B cell (primary cell): ENCODE measurements at regions of chr20 and their contacts with region 1.

Region 1: DNA sequence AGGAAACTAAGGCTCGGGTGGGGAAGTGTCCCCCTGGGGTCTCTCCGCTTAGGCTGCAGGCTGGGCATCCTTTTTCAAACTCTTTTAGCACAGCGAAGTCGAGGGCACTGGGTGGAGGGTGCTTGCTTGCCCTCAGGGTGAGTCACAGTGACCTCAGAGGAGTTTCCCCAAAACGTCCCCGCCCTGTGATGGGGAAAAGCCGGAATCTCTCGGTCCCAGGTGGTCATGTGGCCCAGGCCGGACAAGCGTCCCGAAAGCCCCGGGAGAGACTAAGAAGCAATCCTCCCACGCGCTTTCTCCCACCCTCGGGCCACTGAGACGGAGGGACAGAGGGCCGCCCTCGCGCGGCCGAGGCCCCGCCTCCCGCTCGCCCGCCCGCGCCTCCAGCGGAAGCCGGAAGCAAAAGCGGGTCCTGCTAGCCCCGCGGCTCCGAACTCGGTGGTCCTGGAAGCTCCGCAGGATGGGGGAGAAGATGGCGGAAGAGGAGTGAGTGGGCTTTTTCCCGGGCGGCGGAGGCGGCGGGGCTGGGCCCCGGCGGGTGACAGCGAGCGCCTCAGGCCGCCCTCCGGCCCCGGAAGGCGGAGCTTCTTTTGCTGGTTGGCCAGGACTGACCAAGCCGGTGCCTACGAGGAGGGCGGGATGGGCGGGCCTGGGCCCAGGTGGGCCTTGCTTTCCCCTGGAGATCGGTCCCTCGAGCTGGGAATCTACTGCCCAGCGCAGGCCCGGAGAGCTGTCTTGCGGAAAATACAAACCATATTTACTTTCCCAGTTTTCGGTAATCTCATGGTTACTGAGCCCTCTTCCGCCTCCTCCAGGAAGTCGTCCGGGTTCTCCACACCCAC is at the start of gene SLC9A8:
- DNase-seq: peak; percentile 93
- ATAC-seq: peak; percentile 89
- H3K4me3 ChIP-seq: peak within 1 kb of the TSS; percentile 81 to 97 (median 87)
- H3K4me3 Mint-ChIP-seq: peak within 1 kb of the TSS; percentile 97
- H3K27ac ChIP-seq: peak within 1 kb of the TSS; percentile 93 to 98
- H3K27ac Mint-ChIP-seq: peak within 1 kb of the TSS; percentile 94
- H3K4me1 ChIP-seq: peaks cover 24 to 31% of the 10 kb centered on the region in 2 donors
- H3K4me1 Mint-ChIP-seq: peaks cover 47% of the 10 kb centered on the region
- H3K27me3 ChIP-seq: no peaks in the 10 kb centered on the region
- H3K27me3 Mint-ChIP-seq: no peaks in the 10 kb centered on the region
- CTCF ChIP-seq: peak; percentile 35
- total RNA-seq, gene SLC9A8: 24.2 and 29.7 TPM in 2 replicates

Region 2: DNA sequence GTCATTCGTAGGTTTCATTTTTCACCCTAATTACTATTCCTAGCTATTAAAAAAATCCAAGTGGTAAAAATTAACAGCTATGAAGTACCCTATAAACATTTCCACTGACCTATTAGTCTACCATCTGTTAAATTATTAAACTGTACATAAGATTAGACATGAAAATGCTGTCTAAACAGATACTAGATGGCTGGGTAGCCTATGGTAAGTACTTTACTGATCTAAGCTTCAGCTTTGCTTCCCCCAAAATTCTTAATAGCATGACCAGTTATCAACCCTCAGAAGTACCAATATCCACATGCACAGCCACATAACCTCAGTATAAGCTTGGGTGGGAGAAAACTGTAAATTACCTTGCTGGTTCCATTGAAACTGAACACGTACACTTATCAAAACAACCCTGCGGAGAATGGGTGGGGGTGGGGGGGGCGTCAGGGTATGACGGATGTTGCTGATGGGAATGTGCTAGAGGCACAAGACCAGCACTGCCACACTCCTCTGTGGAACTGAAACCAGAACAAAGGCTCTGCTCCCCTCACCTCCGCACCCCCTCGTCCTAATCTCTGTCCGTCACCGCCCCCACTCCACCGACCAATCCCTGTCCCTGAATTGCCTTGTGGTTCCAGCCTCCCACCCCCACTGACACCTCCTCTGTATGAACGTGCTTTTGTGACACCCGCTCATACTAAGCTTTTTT is 144.4 kb before region 1 on chr20:
- CTCF ChIA-PET with region 1: no interaction called
- POLR2A ChIA-PET with region 1: no interaction called
- intact Hi-C with region 1: loop called (anchors 1 kb)
- DNase-seq: peak; percentile 78
- ATAC-seq: peak; percentile 92
- H3K4me3 ChIP-seq: peak overlapping the region in 1 of 5 experiments; percentile 8
- H3K4me3 Mint-ChIP-seq: peak overlapping the region; percentile 81
- H3K27ac ChIP-seq: no peak overlapping the region
- H3K27ac Mint-ChIP-seq: peak overlapping the region; percentile 54
- H3K4me1 ChIP-seq: peaks cover 21 to 22% of the 10 kb centered on the region in 2 donors
- H3K4me1 Mint-ChIP-seq: peaks cover 38% of the 10 kb centered on the region
- H3K27me3 ChIP-seq: no peaks in the 10 kb centered on the region
- H3K27me3 Mint-ChIP-seq: no peaks in the 10 kb centered on the region
- CTCF ChIP-seq: no peak

Region 3: GRCh38 chr20:49724408-49725223 is 88.1 kb before region 1 on chr20:
- CTCF ChIA-PET with region 1: no interaction called
- POLR2A ChIA-PET with region 1: no interaction called
- intact Hi-C with region 1: no loop called
- DNase-seq: peak; percentile 58
- ATAC-seq: peak; percentile 21
- H3K4me3 ChIP-seq: no peak overlapping the region
- H3K4me3 Mint-ChIP-seq: no peak overlapping the region
- H3K27ac ChIP-seq: no peak overlapping the region
- H3K27ac Mint-ChIP-seq: no peak overlapping the region
- H3K4me1 ChIP-seq: peaks cover 7 to 11% of the 10 kb centered on the region in 2 donors
- H3K4me1 Mint-ChIP-seq: peaks cover 12% of the 10 kb centered on the region
- H3K27me3 ChIP-seq: peaks cover 0 to under 1% (median 0%) of the 10 kb centered on the region in 4 experiments
- H3K27me3 Mint-ChIP-seq: no peaks in the 10 kb centered on the region
- CTCF ChIP-seq: no peak

Region 4: DNA sequence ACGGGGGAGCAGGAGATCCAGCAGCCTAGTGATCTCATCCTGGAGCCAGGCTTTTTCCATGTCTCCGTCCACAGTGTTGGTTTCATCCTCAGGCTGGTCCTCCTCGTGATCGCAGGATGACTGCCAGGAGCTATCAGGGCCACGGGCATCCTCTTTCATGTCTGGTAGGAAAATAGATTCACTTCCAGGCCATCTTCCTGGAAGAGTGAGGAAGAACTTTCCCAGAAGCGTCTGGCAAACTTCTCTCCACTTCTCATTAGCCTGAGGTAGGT is 15.4 kb before region 1 on chr20:
- CTCF ChIA-PET with region 1: interaction called, 7 read pairs
- POLR2A ChIA-PET with region 1: interaction called, 9 read pairs
- intact Hi-C with region 1: loop called (anchors 1 kb)
- DNase-seq: no peak
- ATAC-seq: no peak
- H3K4me3 ChIP-seq: no peak overlapping the region
- H3K4me3 Mint-ChIP-seq: no peak overlapping the region
- H3K27ac ChIP-seq: no peak overlapping the region
- H3K27ac Mint-ChIP-seq: peak overlapping the region; percentile 26
- H3K4me1 ChIP-seq: peaks cover 46 to 54% of the 10 kb centered on the region in 2 donors
- H3K4me1 Mint-ChIP-seq: peaks cover 46% of the 10 kb centered on the region
- H3K27me3 ChIP-seq: peaks cover 0 to 14% (median 7%) of the 10 kb centered on the region in 4 experiments
- H3K27me3 Mint-ChIP-seq: peaks cover 16% of the 10 kb centered on the region
- CTCF ChIP-seq: no peak

Region 5: GRCh38 chr20:49915378-49916145 is 102.9 kb after region 1 on chr20 and contains the start of gene SPATA2:
- CTCF ChIA-PET with region 1: no interaction called
- POLR2A ChIA-PET with region 1: interaction called, 8 read pairs
- intact Hi-C with region 1: loop called (anchors 1 kb)
- DNase-seq: peak; percentile 99
- ATAC-seq: peak; percentile 81
- H3K4me3 ChIP-seq: peak within 1 kb of the TSS; percentile 79 to 96 (median 93)
- H3K4me3 Mint-ChIP-seq: peak within 1 kb of the TSS; percentile 99
- H3K27ac ChIP-seq: peak within 1 kb of the TSS; percentile 97 to 99
- H3K27ac Mint-ChIP-seq: peak within 1 kb of the TSS; percentile 100
- H3K4me1 ChIP-seq: peaks cover 12 to 26% of the 10 kb centered on the region in 2 donors
- H3K4me1 Mint-ChIP-seq: peaks cover 31% of the 10 kb centered on the region
- H3K27me3 ChIP-seq: no peaks in the 10 kb centered on the region
- H3K27me3 Mint-ChIP-seq: no peaks in the 10 kb centered on the region
- CTCF ChIP-seq: no peak
- total RNA-seq, gene SPATA2: 10.6 and 10.7 TPM in 2 replicates

Region 6: GRCh38 chr20:49936153-49937027 is 123.7 kb after region 1 on chr20 and contains the start of gene RNF114:
- CTCF ChIA-PET with region 1: interaction called, 3 read pairs
- POLR2A ChIA-PET with region 1: no interaction called
- intact Hi-C with region 1: loop called (anchors 5 kb)
- DNase-seq: peak; percentile 93
- ATAC-seq: peak; percentile 93
- H3K4me3 ChIP-seq: peak within 1 kb of the TSS; percentile 78 to 99 (median 94)
- H3K4me3 Mint-ChIP-seq: peak within 1 kb of the TSS; percentile 99
- H3K27ac ChIP-seq: peak within 1 kb of the TSS; percentile 89 to 90
- H3K27ac Mint-ChIP-seq: peak within 1 kb of the TSS; percentile 93
- H3K4me1 ChIP-seq: peaks cover 33 to 42% of the 10 kb centered on the region in 2 donors
- H3K4me1 Mint-ChIP-seq: peaks cover 49% of the 10 kb centered on the region
- H3K27me3 ChIP-seq: no peaks in the 10 kb centered on the region
- H3K27me3 Mint-ChIP-seq: no peaks in the 10 kb centered on the region
- CTCF ChIP-seq: no peak
- total RNA-seq, gene RNF114: 81.7 and 86.0 TPM in 2 replicates

Region 7: DNA sequence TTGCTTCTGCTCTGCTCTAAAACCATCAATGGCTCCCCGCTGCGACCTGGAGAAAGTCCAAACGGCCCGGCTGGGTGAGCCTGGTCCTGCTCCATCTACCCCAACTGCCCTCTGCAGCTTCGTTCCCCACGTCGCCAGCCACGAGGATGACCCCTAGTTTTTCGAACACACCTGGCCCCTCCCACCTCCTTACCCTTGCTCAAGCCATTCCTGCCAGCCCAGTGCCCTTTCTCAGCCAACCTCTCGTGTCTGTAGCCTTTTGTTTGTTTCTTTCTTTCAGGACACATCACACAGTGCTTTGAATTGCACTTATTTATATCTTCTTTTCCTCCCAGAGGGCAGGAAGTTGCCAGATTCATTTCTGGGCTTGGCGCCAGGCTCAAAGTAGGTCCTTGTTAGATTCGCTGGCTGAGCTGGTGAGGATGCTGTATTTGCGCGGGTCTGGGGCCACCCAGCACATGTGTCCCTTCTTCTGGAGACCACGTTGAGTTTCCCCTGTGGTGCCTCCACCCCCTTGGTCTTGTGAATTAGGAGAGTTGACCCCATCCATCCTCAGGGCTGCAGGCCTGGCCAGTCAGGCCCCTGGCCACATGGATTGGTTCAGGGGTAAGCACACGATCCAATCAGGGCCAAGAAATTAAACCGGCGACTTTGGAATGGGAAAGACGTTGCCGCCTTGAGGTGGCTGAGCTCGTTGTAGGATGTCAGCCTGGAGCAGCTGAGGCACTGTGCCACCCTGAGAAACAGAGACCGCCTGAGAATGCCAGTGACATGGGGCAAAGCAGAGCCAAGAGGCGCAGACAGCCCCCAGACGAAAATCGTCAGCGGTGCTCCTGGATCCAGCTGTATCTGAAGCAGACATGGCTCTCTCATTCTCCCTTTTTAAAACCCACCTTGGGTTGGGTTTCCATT is 533.9 kb after region 1 on chr20:
- CTCF ChIA-PET with region 1: no interaction called
- POLR2A ChIA-PET with region 1: no interaction called
- intact Hi-C with region 1: loop called (anchors 10 kb)
- DNase-seq: no peak
- ATAC-seq: no peak
- H3K4me3 ChIP-seq: no peak overlapping the region
- H3K4me3 Mint-ChIP-seq: no peak overlapping the region
- H3K27ac ChIP-seq: no peak overlapping the region
- H3K27ac Mint-ChIP-seq: no peak overlapping the region
- H3K4me1 ChIP-seq: peaks cover 12 to 21% of the 10 kb centered on the region in 2 donors
- H3K4me1 Mint-ChIP-seq: peaks cover 29% of the 10 kb centered on the region
- H3K27me3 ChIP-seq: peaks cover 0 to 42% (median 12%) of the 10 kb centered on the region in 4 experiments
- H3K27me3 Mint-ChIP-seq: peaks cover 47% of the 10 kb centered on the region
- CTCF ChIP-seq: no peak